Heart right ventricle (tissue), 16 donors: ENCODE measurements at regions of chr3 and their contacts with region 1.

Region 1: GRCh38 chr3:182683453-182683852 is 109.9 kb upstream of the ATP11B start:
- DNase-seq: peak in 1 of 2 donors; percentile 40
- ATAC-seq: peak; percentile 77 to 91 (median 86)
- H3K4me3 ChIP-seq: peak overlapping the region in 7 of 10 donors; percentile 44 to 63 (median 60)
- H3K27ac ChIP-seq: no peak overlapping the region
- H3K4me1 ChIP-seq: peaks cover 0 to 17% (median 6%) of the 10 kb centered on the region in 9 donors
- H3K27me3 ChIP-seq: peaks cover 6 to 77% (median 57%) of the 10 kb centered on the region in 7 donors
- CTCF ChIP-seq: peak; percentile 64 to 94 (median 87)

Region 2: GRCh38 chr3:181210275-181210674 is 1473.2 kb before region 1 on chr3:
- intact Hi-C with region 1: loop called in 4 of 10 experiments (anchors 5 to 10 kb)
- DNase-seq: no peak
- ATAC-seq: no peak
- H3K4me3 ChIP-seq: no peak overlapping the region
- H3K27ac ChIP-seq: no peak overlapping the region
- H3K4me1 ChIP-seq: no peaks in the 10 kb centered on the region
- H3K27me3 ChIP-seq: peaks cover 0 to 33% (median 10%) of the 10 kb centered on the region in 7 donors
- CTCF ChIP-seq: peak in 8 of 9 donors; percentile 16 to 52 (median 35)

Region 3: GRCh38 chr3:181326637-181327223 is 1356.7 kb before region 1 on chr3:
- intact Hi-C with region 1: loop called in 2 of 10 experiments (anchors 10 kb)
- DNase-seq: no peak
- ATAC-seq: peak in 2 of 8 donors; percentile 42 to 46
- H3K4me3 ChIP-seq: no peak overlapping the region
- H3K27ac ChIP-seq: no peak overlapping the region
- H3K4me1 ChIP-seq: no peaks in the 10 kb centered on the region
- H3K27me3 ChIP-seq: peaks cover 0 to 3% (median 0%) of the 10 kb centered on the region in 7 donors
- CTCF ChIP-seq: peak; percentile 26 to 73 (median 62)

Region 4: DNA sequence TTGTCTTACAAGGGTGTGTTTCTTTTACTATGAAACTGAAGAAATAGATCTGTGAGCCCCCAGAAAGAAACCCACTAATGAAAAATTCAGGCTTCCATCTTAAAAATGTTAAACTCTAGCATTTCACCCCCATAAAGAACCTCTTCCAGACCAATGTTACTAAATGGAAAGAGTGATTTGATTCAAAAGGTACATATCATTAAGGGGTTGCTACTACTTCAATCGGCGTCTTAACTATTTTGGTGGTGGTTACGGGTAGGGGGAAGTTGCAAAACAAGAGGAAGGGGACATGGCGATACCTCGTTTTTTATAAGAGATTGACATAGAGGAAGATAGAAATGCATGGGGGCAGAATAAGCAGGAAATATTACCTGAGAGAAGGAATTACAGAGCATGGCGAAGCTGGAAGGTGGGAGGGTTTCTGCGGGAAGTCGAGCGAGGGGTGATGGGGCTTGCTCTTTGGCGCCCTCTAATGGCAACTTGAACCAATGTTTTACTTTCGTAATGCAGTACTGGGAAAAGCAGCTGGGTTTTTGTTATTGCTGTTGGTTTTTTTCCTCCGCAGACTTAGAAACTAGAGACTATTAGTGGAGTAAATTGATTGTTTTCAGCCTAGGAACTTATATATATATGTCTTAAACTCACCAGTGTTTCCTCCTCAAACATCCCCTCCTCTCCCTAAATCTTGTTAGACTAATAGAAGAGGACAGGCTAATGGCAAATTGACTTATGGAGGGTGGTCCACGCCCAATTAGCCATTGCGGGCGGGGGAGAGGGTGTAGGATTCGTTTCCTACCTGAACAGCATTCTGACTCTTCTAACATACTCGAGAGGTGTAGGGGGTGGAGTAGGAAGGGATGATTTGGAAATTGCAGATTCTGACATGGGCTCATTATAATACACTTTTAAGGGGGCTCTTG is 983.0 kb before region 1 on chr3:
- intact Hi-C with region 1: loop called in 5 of 10 experiments (anchors 5 to 10 kb)
- DNase-seq: peak; percentile 24 to 65
- ATAC-seq: peak in 7 of 8 donors; percentile 70 to 80 (median 77)
- H3K4me3 ChIP-seq: peak overlapping the region in 3 of 10 donors; percentile 3 to 25 (median 16)
- H3K27ac ChIP-seq: no peak overlapping the region
- H3K4me1 ChIP-seq: peaks cover 6 to 38% (median 18%) of the 10 kb centered on the region in 9 donors
- H3K27me3 ChIP-seq: peaks cover 39 to 99% (median 99%) of the 10 kb centered on the region in 7 donors
- CTCF ChIP-seq: peak; percentile 61 to 86 (median 84)

Region 5: GRCh38 chr3:181709537-181710279 is 973.7 kb before region 1 on chr3:
- intact Hi-C with region 1: loop called (anchors 1 to 10 kb)
- DNase-seq: peak; percentile 66 to 68
- ATAC-seq: peak in 3 of 8 donors; percentile 36 to 61 (median 51)
- H3K4me3 ChIP-seq: no peak overlapping the region
- H3K27ac ChIP-seq: no peak overlapping the region
- H3K4me1 ChIP-seq: peaks cover 0 to 32% (median 27%) of the 10 kb centered on the region in 9 donors
- H3K27me3 ChIP-seq: peaks cover 34 to 100% (median 100%) of the 10 kb centered on the region in 7 donors
- CTCF ChIP-seq: peak; percentile 65 to 91 (median 83)

Region 6: DNA sequence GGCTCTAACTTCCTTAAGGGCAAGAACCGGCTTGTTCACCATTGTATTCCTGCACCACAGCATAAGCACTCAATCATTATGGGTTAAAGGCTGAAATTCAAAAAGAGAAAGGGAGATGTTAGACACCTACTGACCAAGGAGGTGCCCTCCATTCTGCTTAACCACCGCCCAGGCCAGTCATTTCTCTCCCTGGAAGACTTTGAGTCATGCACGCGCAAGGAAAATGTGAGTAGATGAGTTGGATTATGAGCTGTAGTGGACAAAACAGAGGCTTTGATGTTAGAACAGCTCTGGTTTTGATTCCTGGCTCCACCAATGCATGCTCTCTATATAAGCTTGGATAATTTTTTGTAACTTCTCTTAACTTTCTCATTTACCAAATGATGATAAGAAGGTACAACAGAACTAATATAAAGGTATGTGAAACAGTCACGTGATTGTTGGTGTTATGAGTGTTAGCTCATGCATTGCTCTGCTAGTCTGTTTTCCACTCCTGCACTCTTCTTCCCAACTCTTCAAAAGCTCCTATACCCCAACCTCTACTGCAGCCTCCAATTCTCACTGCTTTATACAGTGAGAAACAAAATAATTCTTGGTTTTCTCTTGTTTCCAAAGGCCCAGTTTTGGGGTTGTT is 38.5 kb before region 1 on chr3:
- intact Hi-C with region 1: no loop called
- DNase-seq: no peak
- ATAC-seq: no peak
- H3K4me3 ChIP-seq: no peak overlapping the region
- H3K27ac ChIP-seq: no peak overlapping the region
- H3K4me1 ChIP-seq: no peaks in the 10 kb centered on the region
- H3K27me3 ChIP-seq: peaks cover 0 to 7% (median 4%) of the 10 kb centered on the region in 7 donors
- CTCF ChIP-seq: no peak